ENCODE measurements at regions of chr4 and their contacts with region 1.

Region 1: DNA sequence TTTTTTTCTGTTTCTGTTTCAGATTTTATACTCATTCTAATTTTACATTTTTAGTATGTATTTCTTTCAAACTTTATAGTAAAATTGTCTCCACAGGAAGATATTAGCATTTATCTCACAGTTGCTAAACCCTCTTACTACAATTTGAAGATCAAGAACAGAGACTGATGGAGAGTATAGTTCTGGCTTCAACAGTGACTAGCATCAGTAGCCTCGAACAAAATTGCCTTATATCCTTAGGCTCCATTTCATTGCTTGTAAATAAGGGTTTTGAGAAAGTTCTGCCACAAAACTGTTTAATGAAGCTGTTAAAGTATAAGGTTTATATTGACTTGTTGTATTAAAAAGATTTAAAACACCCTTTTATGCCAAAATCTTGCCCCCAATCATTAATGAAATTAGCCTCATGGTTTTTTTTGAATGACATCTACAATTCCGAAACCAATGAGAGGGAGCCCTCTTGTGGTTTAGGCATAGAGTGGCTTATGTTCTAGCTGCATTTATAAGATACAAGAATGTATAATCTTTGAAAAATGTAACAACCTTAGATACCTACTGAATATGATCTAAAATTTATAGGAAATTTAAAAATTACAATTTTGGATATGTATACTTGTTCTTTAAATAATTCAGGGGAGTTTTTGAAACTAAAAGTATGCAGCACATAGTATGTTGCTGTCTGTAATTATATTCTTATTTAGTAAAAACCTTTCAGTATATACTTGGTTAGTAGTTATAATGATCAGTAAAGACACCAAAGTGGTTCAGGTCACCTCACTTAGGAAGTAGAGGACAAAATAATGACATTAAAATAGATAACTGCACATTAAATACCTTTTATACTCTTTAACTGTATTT is 109.8 kb upstream of the HPGD start:
- DNase-seq: no peak
- ATAC-seq: no peak
- H3K4me3 ChIP-seq: no peak overlapping the region
- H3K27ac ChIP-seq: no peak overlapping the region
- H3K4me1 ChIP-seq: no peaks in the 10 kb centered on the region
- H3K27me3 ChIP-seq: no peaks in the 10 kb centered on the region

Region 2: GRCh38 chr4:174365018-174365587 is 267.0 kb before region 1 on chr4:
- intact Hi-C with region 1: loop called (anchors 5 kb)
- DNase-seq: no peak
- ATAC-seq: no peak
- H3K4me3 ChIP-seq: no peak overlapping the region
- H3K27ac ChIP-seq: no peak overlapping the region
- H3K4me1 ChIP-seq: no peaks in the 10 kb centered on the region
- H3K27me3 ChIP-seq: no peaks in the 10 kb centered on the region

Region 3: DNA sequence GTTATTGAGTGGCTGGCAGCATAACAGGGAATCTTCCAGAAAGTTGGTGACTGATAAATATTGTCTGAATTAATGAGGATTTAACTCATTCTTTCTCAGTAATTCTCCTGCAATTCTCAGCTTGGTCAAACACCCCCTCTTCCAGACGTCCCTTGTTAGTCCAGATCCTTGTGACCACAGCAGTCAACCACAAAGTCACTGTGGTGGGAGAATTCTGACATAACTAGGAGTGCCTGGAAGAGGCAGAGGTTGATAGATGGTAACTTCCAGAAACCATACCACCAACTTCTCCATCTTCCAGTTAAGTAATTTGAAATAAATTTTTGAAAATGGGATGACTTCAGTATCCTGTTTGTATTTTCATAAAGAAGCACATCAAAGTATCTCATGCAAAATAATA is 258.3 kb before region 1 on chr4:
- intact Hi-C with region 1: loop called in 3 of 4 experiments (anchors 5 kb)
- DNase-seq: no peak
- ATAC-seq: no peak
- H3K4me3 ChIP-seq: no peak overlapping the region
- H3K27ac ChIP-seq: no peak overlapping the region
- H3K4me1 ChIP-seq: no peaks in the 10 kb centered on the region
- H3K27me3 ChIP-seq: no peaks in the 10 kb centered on the region

Measured in right cardiac atrium (tissue), 5 donors.